ENCODE measurements at regions of chr5 and their contacts with region 1.

Region 1: GRCh38 chr5:102921341-102922047 is 166.4 kb downstream of the PAM start:
- DNase-seq: peak; percentile 70
- ATAC-seq: peak; percentile 79
- H3K4me3 ChIP-seq: no peak overlapping the region
- H3K27ac ChIP-seq: peak overlapping the region; percentile 83
- H3K4me1 ChIP-seq: peaks cover 36% of the 10 kb centered on the region
- H3K27me3 ChIP-seq: no peaks in the 10 kb centered on the region
- CTCF ChIP-seq: no peak

Region 2: DNA sequence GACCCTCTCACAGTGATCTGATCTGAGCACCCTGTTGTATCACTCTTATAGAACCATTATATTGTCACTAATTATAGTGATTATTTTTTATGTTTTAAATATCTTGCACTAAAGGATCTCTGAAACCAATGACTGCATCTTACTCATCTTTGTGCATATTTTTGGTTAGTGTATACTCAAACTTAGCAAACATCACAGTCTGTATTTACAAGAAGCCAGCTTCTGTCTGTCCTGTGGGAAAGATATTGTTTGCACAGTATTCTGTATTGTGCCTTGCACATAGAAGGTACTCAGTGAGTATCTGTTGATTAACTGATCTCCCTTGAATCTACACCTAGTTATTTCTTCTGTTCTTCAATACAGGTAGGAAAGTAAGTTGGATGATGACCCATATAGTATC is 34.9 kb before region 1 on chr5:
- CTCF ChIA-PET with region 1: no interaction called
- POLR2A ChIA-PET with region 1: no interaction called
- intact Hi-C with region 1: loop called (anchors 2 kb)
- DNase-seq: peak; percentile 77
- ATAC-seq: peak; percentile 97
- H3K4me3 ChIP-seq: no peak overlapping the region
- H3K27ac ChIP-seq: peak overlapping the region; percentile 72
- H3K4me1 ChIP-seq: peaks cover 32% of the 10 kb centered on the region
- H3K27me3 ChIP-seq: no peaks in the 10 kb centered on the region
- CTCF ChIP-seq: no peak

Region 3: GRCh38 chr5:102971697-102972293 is 50.3 kb after region 1 on chr5:
- CTCF ChIA-PET with region 1: no interaction called
- POLR2A ChIA-PET with region 1: no interaction called
- intact Hi-C with region 1: loop called (anchors 1 kb)
- DNase-seq: peak; percentile 70
- ATAC-seq: peak; percentile 82
- H3K4me3 ChIP-seq: no peak overlapping the region
- H3K27ac ChIP-seq: no peak overlapping the region
- H3K4me1 ChIP-seq: peaks cover 6% of the 10 kb centered on the region; the same call in 1 of the 2 replicates
- H3K27me3 ChIP-seq: no peaks in the 10 kb centered on the region
- CTCF ChIP-seq: peak; percentile 86

Measured in PC-3 (cell line).